PC-3 (cell line): ENCODE measurements at regions of chr9 and their contacts with region 1.

Region 1: GRCh38 chr9:3549225-3549624 is 23.4 kb upstream of the RFX3 start:
- DNase-seq: no peak
- ATAC-seq: no peak
- H3K4me3 ChIP-seq: no peak overlapping the region
- H3K27ac ChIP-seq: no peak overlapping the region
- H3K4me1 ChIP-seq: no peaks in the 10 kb centered on the region
- H3K27me3 ChIP-seq: no peaks in the 10 kb centered on the region
- CTCF ChIP-seq: no peak

Region 2: GRCh38 chr9:3608011-3608410 is 58.8 kb after region 1 on chr9:
- CTCF ChIA-PET with region 1: no interaction called
- POLR2A ChIA-PET with region 1: no interaction called
- intact Hi-C with region 1: loop called (anchors 10 kb)
- DNase-seq: no peak
- ATAC-seq: no peak
- H3K4me3 ChIP-seq: no peak overlapping the region
- H3K27ac ChIP-seq: no peak overlapping the region
- H3K4me1 ChIP-seq: no peaks in the 10 kb centered on the region
- H3K27me3 ChIP-seq: no peaks in the 10 kb centered on the region
- CTCF ChIP-seq: no peak

Region 3: GRCh38 chr9:3698076-3698475 is 148.9 kb after region 1 on chr9:
- CTCF ChIA-PET with region 1: no interaction called
- POLR2A ChIA-PET with region 1: no interaction called
- intact Hi-C with region 1: loop called (anchors 10 kb)
- DNase-seq: no peak
- ATAC-seq: no peak
- H3K4me3 ChIP-seq: no peak overlapping the region
- H3K27ac ChIP-seq: no peak overlapping the region
- H3K4me1 ChIP-seq: no peaks in the 10 kb centered on the region
- H3K27me3 ChIP-seq: no peaks in the 10 kb centered on the region
- CTCF ChIP-seq: no peak